Activated CD8-positive, alpha-beta memory T cell treated with anti-CD3 and anti-CD28 coated beads, Interleukin-2, amount 10 ng/mL, durations not matched to agents 7 days and 5 days (primary cell): ENCODE measurements at regions of chr15 and their contacts with region 1.

Region 1: GRCh38 chr15:84588053-84588874 is 12.5 kb upstream of the ZSCAN2 start:
- DNase-seq: peak; percentile 91
- ATAC-seq: peak; percentile 100
- H3K4me3 Mint-ChIP-seq: peak overlapping the region; percentile 57
- H3K27ac Mint-ChIP-seq: no peak overlapping the region
- H3K4me1 Mint-ChIP-seq: peaks cover 2% of the 10 kb centered on the region
- H3K27me3 Mint-ChIP-seq: peaks cover 16% of the 10 kb centered on the region

Region 2: DNA sequence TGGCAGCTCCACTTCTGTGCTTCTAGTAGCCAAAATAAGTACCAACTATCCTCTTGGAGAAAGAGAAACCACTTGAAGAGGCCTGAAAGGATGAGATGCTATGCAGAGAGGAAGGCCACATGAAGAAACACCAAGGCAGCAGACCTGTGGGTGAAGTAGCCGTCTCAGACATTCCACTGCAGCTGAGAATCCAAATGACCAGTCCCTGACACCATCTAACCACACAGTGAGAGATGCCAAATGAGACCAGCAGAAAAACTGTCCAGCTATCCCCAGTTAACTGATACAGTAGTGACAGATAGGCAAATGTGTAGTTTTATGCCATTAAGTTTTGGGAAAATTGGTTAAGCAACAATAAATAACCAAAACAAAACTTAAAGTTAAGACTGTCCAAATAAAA is 35.4 kb before region 1 on chr15:
- CTCF ChIA-PET with region 1: no interaction called
- DNase-seq: no peak
- ATAC-seq: no peak
- H3K4me3 Mint-ChIP-seq: no peak overlapping the region
- H3K27ac Mint-ChIP-seq: no peak overlapping the region
- H3K4me1 Mint-ChIP-seq: peaks cover 13% of the 10 kb centered on the region
- H3K27me3 Mint-ChIP-seq: no peaks in the 10 kb centered on the region

Region 3: DNA sequence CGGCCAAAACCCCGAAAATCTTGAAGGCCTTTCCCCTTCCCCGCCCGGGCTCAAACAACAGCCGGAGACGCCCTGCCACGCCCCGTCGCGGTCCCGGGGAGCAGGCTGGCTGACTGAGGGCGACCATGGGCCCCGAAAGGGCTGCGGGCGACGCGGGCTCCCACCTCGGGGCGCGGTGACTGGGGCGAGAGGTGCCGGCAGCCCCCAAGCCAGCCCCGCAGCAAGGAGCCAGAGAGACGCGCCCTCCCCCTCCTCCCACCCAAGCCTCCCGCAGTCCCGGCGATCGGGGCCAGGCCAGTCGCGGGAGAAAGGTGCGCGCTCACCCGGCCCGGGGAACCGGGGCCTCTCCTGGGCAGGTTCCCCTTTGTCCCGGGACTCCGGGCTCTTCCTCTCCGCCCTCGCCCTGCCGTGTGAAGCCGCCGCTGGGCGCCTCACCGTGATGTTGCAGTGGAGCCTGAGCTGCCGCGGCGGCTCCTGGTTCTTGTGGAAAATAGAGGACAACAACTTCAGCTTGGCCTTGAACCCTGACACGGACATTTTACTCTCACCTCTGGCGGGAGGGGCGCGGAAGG is 18.0 kb before region 1 on chr15:
- CTCF ChIA-PET with region 1: interaction called, 17 read pairs
- DNase-seq: peak; percentile 75
- ATAC-seq: peak; percentile 70
- H3K4me3 Mint-ChIP-seq: peak overlapping the region; percentile 79
- H3K27ac Mint-ChIP-seq: peak overlapping the region; percentile 85
- H3K4me1 Mint-ChIP-seq: peaks cover 20% of the 10 kb centered on the region
- H3K27me3 Mint-ChIP-seq: peaks cover 5% of the 10 kb centered on the region

Region 4: GRCh38 chr15:84633311-84634227 is 45.3 kb after region 1 on chr15:
- CTCF ChIA-PET with region 1: interaction called, 17 read pairs
- DNase-seq: peak; percentile 78
- ATAC-seq: peak; percentile 54
- H3K4me3 Mint-ChIP-seq: peak overlapping the region; percentile 93
- H3K27ac Mint-ChIP-seq: peak overlapping the region; percentile 97
- H3K4me1 Mint-ChIP-seq: peaks cover 50% of the 10 kb centered on the region
- H3K27me3 Mint-ChIP-seq: no peaks in the 10 kb centered on the region

Region 5: GRCh38 chr15:84658080-84658787 is 70.0 kb after region 1 on chr15 and contains the start of gene NMB:
- CTCF ChIA-PET with region 1: interaction called, 25 read pairs
- DNase-seq: peak; percentile 86
- ATAC-seq: peak; percentile 68
- H3K4me3 Mint-ChIP-seq: peak within 1 kb of the TSS; percentile 65
- H3K27ac Mint-ChIP-seq: peak within 1 kb of the TSS; percentile 61
- H3K4me1 Mint-ChIP-seq: peaks cover 34% of the 10 kb centered on the region
- H3K27me3 Mint-ChIP-seq: no peaks in the 10 kb centered on the region
- total RNA-seq, gene NMB: 1.5 to 1.8 TPM

Region 6: GRCh38 chr15:84773716-84774115 is 185.5 kb after region 1 on chr15:
- CTCF ChIA-PET with region 1: no interaction called
- DNase-seq: no peak
- ATAC-seq: no peak
- H3K4me3 Mint-ChIP-seq: no peak overlapping the region
- H3K27ac Mint-ChIP-seq: no peak overlapping the region
- H3K4me1 Mint-ChIP-seq: peaks cover 7% of the 10 kb centered on the region
- H3K27me3 Mint-ChIP-seq: no peaks in the 10 kb centered on the region

Region 7: DNA sequence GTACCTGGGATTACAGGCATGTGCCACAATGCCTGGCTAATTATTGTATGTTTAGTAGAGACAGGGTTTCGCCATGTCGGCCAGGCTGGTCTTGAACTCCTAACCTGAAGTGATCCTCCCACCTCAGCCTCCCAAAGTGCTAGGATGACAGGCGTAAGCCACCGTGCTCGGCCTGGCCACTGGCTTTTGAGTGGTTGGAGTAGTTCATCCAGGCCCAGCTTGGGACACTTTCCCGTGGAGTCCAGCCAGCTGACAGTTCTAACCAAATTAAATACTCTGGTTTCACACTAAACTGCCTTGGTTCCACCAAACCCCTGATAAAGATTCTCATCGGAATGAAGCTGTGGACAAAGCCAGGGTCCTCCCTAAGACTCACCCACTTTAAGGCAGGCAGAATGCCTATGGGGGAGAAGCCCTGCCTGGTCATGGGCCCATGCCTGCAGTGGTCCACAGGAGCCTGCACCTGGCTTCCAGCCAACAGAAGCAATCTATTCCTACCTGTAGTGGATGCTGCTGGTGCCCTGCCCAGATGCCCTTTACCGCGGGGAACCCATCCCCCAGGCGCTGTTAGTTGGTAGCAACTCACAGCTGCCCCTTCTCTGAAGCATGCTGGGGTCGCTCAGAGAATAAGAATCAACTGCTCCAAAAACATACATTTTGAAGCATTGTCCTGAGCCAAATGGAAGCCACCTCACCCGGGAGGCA is 291.0 kb after region 1 on chr15:
- CTCF ChIA-PET with region 1: interaction called, 16 read pairs
- DNase-seq: no peak
- ATAC-seq: no peak
- H3K4me3 Mint-ChIP-seq: no peak overlapping the region
- H3K27ac Mint-ChIP-seq: no peak overlapping the region
- H3K4me1 Mint-ChIP-seq: peaks cover 3% of the 10 kb centered on the region
- H3K27me3 Mint-ChIP-seq: peaks cover 7% of the 10 kb centered on the region

Region 8: GRCh38 chr15:84929744-84930371 is 341.6 kb after region 1 on chr15:
- CTCF ChIA-PET with region 1: interaction called, 46 read pairs
- DNase-seq: no peak
- ATAC-seq: peak; percentile 14
- H3K4me3 Mint-ChIP-seq: no peak overlapping the region
- H3K27ac Mint-ChIP-seq: no peak overlapping the region
- H3K4me1 Mint-ChIP-seq: peaks cover 6% of the 10 kb centered on the region
- H3K27me3 Mint-ChIP-seq: no peaks in the 10 kb centered on the region